ENCODE measurements at regions of chr4 and their contacts with region 1.

Region 1: GRCh38 chr4:139501927-139502899 is 48.3 kb downstream of the RAB33B start:
- DNase-seq: no peak
- H3K4me3 ChIP-seq: no peak overlapping the region
- H3K27ac ChIP-seq: no peak overlapping the region
- H3K27me3 ChIP-seq: no peaks in the 10 kb centered on the region
- CTCF ChIP-seq: no peak

Region 2: DNA sequence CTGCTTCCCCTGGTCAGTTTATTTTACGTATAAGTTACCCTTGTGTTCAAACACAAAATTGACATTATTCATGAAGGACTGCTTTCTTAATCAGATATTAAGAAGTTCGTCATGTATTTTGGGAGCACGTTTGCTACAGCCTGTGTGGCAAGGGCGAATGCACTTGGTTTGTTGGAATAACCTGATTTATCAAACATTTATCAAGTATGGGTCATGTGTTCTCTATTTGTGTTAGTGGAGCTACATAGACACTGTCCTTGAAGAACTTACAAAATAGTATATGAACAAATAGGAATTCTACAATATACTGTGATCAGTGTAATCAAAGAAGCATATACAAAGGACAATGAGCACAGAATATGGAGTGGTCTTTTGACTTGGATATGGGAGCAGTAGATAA is 25.9 kb before region 1 on chr4:
- CTCF ChIA-PET with region 1: interaction called, 23 read pairs
- POLR2A ChIA-PET with region 1: no interaction called
- DNase-seq: no peak
- H3K4me3 ChIP-seq: no peak overlapping the region
- H3K27ac ChIP-seq: no peak overlapping the region
- H3K27me3 ChIP-seq: no peaks in the 10 kb centered on the region
- CTCF ChIP-seq: no peak

Region 3: GRCh38 chr4:139483000-139483399 is 19.2 kb before region 1 on chr4:
- CTCF ChIA-PET with region 1: interaction called, 23 read pairs
- POLR2A ChIA-PET with region 1: interaction called, 3 read pairs
- DNase-seq: no peak
- H3K4me3 ChIP-seq: no peak overlapping the region
- H3K27ac ChIP-seq: no peak overlapping the region
- H3K27me3 ChIP-seq: no peaks in the 10 kb centered on the region
- CTCF ChIP-seq: no peak

Region 4: GRCh38 chr4:139488442-139488841 is 13.8 kb before region 1 on chr4:
- CTCF ChIA-PET with region 1: interaction called, 16 read pairs
- POLR2A ChIA-PET with region 1: no interaction called
- DNase-seq: no peak
- H3K4me3 ChIP-seq: no peak overlapping the region
- H3K27ac ChIP-seq: no peak overlapping the region
- H3K27me3 ChIP-seq: no peaks in the 10 kb centered on the region
- CTCF ChIP-seq: no peak

Region 5: GRCh38 chr4:139530833-139531427 is 28.7 kb after region 1 on chr4:
- CTCF ChIA-PET with region 1: interaction called, 18 read pairs
- POLR2A ChIA-PET with region 1: no interaction called
- DNase-seq: no peak
- H3K4me3 ChIP-seq: no peak overlapping the region
- H3K27ac ChIP-seq: no peak overlapping the region
- H3K27me3 ChIP-seq: no peaks in the 10 kb centered on the region
- CTCF ChIP-seq: peak; percentile 65

Region 6: GRCh38 chr4:139552517-139553307 is 50.5 kb after region 1 on chr4:
- CTCF ChIA-PET with region 1: interaction called, 10 read pairs
- POLR2A ChIA-PET with region 1: no interaction called
- DNase-seq: no peak
- H3K4me3 ChIP-seq: no peak overlapping the region
- H3K27ac ChIP-seq: no peak overlapping the region
- H3K27me3 ChIP-seq: peaks cover 8% of the 10 kb centered on the region
- CTCF ChIP-seq: no peak

Region 7: DNA sequence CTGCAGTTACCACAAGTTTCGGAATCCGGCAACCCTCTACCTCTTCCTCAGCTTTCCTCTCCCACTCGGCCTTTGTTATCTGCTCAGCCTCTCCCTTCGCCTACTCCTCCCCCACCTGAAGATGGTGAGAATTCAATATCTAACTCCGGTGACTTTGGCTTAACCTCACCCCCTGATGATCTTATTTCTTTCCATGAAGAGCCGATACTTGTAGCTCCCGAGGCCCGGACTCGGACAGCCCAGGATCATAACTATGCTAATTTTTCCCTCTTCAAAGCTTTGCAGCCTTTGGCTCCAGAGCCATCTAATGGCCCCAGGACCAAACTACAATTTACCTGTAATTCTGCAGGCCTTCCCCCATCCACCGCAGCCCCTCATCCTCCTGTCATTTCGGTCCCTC is 131.4 kb after region 1 on chr4:
- CTCF ChIA-PET with region 1: interaction called, 14 read pairs
- POLR2A ChIA-PET with region 1: no interaction called
- DNase-seq: no peak
- H3K4me3 ChIP-seq: no peak overlapping the region
- H3K27ac ChIP-seq: no peak overlapping the region
- H3K27me3 ChIP-seq: peaks cover 23% of the 10 kb centered on the region
- CTCF ChIP-seq: peak; percentile 57

Region 8: GRCh38 chr4:139720540-139721205 is 218.5 kb after region 1 on chr4:
- CTCF ChIA-PET with region 1: no interaction called
- POLR2A ChIA-PET with region 1: no interaction called
- DNase-seq: no peak
- H3K4me3 ChIP-seq: no peak overlapping the region
- H3K27ac ChIP-seq: no peak overlapping the region
- H3K27me3 ChIP-seq: no peaks in the 10 kb centered on the region
- CTCF ChIP-seq: no peak